GM12878 (cell line): ENCODE measurements at regions of chr17 and their contacts with region 1.

Region 1: GRCh38 chr17:62109378-62109902 is 44.4 kb upstream of the MED13 start:
- DNase-seq: peak; percentile 77
- ATAC-seq: peak; percentile 100
- H3K4me3 ChIP-seq: no peak overlapping the region
- H3K27ac ChIP-seq: no peak overlapping the region
- H3K4me1 ChIP-seq: peaks cover 2% of the 10 kb centered on the region; the same call in 1 of the 2 replicates
- H3K27me3 ChIP-seq: no peaks in the 10 kb centered on the region; a peak in 1 of 4 replicates
- CTCF ChIP-seq: peak; percentile 97 to 100 (median 100); a peak in 5 of 6 replicates
- EP300 ChIP-seq: no peak
- POLR2A ChIP-seq: no peak
- RAD21 ChIP-seq: peak; percentile 100

Region 2: DNA sequence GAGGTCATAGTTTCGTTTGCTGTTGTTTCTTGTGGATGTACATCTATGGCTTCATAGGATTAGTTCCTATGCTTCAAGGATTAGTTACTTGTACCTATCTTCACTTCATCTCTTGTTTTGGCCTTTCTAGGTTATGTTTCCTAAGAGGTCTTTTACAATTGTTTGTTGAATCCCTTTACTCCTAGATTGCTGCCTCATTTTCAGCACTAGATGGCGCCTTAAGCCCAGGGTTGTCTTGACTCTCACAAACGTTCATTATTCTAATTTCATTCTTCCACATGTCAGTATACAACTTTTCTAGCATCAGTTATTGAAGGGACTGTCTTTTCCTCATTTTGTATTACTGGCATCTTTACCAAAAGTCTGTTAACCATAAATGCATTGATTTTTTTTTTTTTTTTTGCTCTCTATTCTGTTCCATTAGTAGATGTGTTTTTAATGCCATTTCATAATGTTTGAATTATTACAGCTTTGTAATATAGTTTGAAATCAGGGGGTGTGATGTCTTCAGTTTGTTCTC is 473.5 kb before region 1 on chr17:
- CTCF ChIA-PET with region 1: interaction called, 45 read pairs
- POLR2A ChIA-PET with region 1: no interaction called
- RAD21 ChIA-PET with region 1: interaction called, 27 read pairs
- SMC1A ChIA-PET with region 1: interaction called, 36 read pairs
- in situ Hi-C with region 1: loop called (anchors 5 kb)
- intact Hi-C with region 1: loop called (anchors 1 kb)
- DNase-seq: peak; percentile 35
- ATAC-seq: peak; percentile 76
- H3K4me3 ChIP-seq: no peak overlapping the region
- H3K27ac ChIP-seq: no peak overlapping the region
- H3K4me1 ChIP-seq: no peaks in the 10 kb centered on the region
- H3K27me3 ChIP-seq: no peaks in the 10 kb centered on the region; a peak in 1 of 4 replicates
- CTCF ChIP-seq: peak; percentile 75 to 83 (median 82)
- EP300 ChIP-seq: no peak
- POLR2A ChIP-seq: no peak
- RAD21 ChIP-seq: peak; percentile 98

Region 3: GRCh38 chr17:61875285-61875684 is 234.2 kb before region 1 on chr17:
- CTCF ChIA-PET with region 1: interaction called, 14 read pairs
- POLR2A ChIA-PET with region 1: interaction called, 11 read pairs
- RAD21 ChIA-PET with region 1: interaction called, 7 read pairs
- SMC1A ChIA-PET with region 1: interaction called, 13 read pairs
- in situ Hi-C with region 1: no loop called
- intact Hi-C with region 1: no loop called
- DNase-seq: no peak
- ATAC-seq: peak; percentile 47
- H3K4me3 ChIP-seq: no peak overlapping the region
- H3K27ac ChIP-seq: no peak overlapping the region
- H3K4me1 ChIP-seq: no peaks in the 10 kb centered on the region
- H3K27me3 ChIP-seq: no peaks in the 10 kb centered on the region
- CTCF ChIP-seq: no peak
- EP300 ChIP-seq: no peak
- POLR2A ChIP-seq: no peak
- RAD21 ChIP-seq: no peak

Region 4: DNA sequence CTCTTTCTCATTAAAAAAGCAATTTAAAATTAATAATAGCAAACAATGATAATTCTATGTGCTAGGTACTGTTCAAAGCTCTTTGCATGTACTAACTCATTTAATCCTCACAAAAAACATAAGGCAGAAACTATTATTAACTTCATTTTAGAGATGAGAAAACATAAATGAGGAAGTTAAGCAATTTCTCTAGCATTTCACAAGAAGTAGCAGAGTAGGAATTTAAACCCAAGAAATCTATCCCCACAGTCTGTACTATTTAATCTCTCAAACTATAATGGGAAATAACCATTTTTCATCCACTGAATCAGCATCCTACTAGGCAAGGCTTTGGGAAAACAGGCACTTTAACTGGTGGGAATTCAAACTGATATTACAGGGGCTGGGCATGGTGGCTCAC is 139.4 kb before region 1 on chr17:
- CTCF ChIA-PET with region 1: interaction called, 28 read pairs
- POLR2A ChIA-PET with region 1: interaction called, 3 read pairs
- RAD21 ChIA-PET with region 1: interaction called, 25 read pairs
- SMC1A ChIA-PET with region 1: interaction called, 14 read pairs
- in situ Hi-C with region 1: no loop called
- intact Hi-C with region 1: loop called (anchors 5 kb)
- DNase-seq: no peak
- ATAC-seq: no peak
- H3K4me3 ChIP-seq: no peak overlapping the region
- H3K27ac ChIP-seq: no peak overlapping the region
- H3K4me1 ChIP-seq: no peaks in the 10 kb centered on the region
- H3K27me3 ChIP-seq: no peaks in the 10 kb centered on the region
- CTCF ChIP-seq: no peak
- EP300 ChIP-seq: no peak
- POLR2A ChIP-seq: no peak
- RAD21 ChIP-seq: no peak

Region 5: DNA sequence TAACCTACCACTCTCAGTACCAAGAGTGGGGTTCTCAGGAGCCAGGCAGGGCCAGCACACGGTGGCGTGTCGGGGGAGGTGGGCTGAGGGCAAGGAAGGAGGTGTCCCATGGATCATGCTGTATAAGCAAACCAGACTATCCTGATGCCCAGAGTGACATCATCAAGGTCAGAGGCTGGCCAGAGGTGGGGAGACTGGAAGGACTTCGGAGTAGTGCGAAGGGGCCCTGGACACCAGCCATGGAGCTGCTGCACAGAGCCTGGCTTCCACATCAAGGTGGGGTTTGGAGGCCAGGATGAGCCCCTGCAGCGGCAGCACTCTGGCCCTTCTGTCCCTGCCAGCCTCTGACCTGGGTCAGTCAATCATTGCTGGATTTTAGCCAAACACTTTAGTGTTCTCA is 79.2 kb before region 1 on chr17:
- CTCF ChIA-PET with region 1: interaction called, 50 read pairs
- POLR2A ChIA-PET with region 1: no interaction called
- RAD21 ChIA-PET with region 1: interaction called, 26 read pairs
- SMC1A ChIA-PET with region 1: interaction called, 21 read pairs
- in situ Hi-C with region 1: no loop called
- intact Hi-C with region 1: no loop called
- DNase-seq: no peak
- ATAC-seq: no peak
- H3K4me3 ChIP-seq: no peak overlapping the region
- H3K27ac ChIP-seq: no peak overlapping the region
- H3K4me1 ChIP-seq: no peaks in the 10 kb centered on the region
- H3K27me3 ChIP-seq: no peaks in the 10 kb centered on the region
- CTCF ChIP-seq: no peak
- EP300 ChIP-seq: no peak
- POLR2A ChIP-seq: no peak; the same call in 1 of the 2 replicates
- RAD21 ChIP-seq: no peak

Region 6: GRCh38 chr17:62075308-62075815 is 34.1 kb before region 1 on chr17:
- CTCF ChIA-PET with region 1: interaction called, 45 read pairs
- POLR2A ChIA-PET with region 1: interaction called, 3 read pairs
- RAD21 ChIA-PET with region 1: interaction called, 25 read pairs
- SMC1A ChIA-PET with region 1: interaction called, 22 read pairs
- in situ Hi-C with region 1: no loop called
- intact Hi-C with region 1: no loop called
- DNase-seq: no peak
- ATAC-seq: peak; percentile 17; the same call in 1 of the 3 replicates
- H3K4me3 ChIP-seq: no peak overlapping the region
- H3K27ac ChIP-seq: no peak overlapping the region
- H3K4me1 ChIP-seq: 0 out of 2 replicates have a peak, but pooled peaks cover 2% of the 10 kb centered on the region
- H3K27me3 ChIP-seq: no peaks in the 10 kb centered on the region; a peak in 1 of 4 replicates
- CTCF ChIP-seq: no peak
- EP300 ChIP-seq: no peak
- POLR2A ChIP-seq: no peak
- RAD21 ChIP-seq: no peak

Region 7: DNA sequence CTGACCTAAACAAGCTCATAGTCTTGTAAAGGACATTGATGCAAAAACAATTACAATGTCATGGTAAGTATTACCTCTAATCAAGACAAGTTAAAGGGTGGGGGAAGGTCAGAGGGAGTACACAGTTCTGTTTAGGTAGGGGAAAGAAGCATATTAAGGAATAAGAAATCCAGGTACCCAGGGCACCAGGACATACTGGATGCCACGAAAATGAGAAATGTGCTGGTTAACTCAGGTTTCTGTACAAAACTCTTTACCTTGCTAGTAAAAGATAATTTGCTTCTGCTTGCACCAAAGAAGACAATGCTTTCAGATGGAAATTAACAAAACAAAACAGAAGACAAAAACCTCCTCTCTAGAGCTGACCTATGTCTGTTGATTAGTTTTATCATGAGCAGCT is 26.3 kb after region 1 on chr17:
- CTCF ChIA-PET with region 1: no interaction called
- POLR2A ChIA-PET with region 1: no interaction called
- RAD21 ChIA-PET with region 1: no interaction called
- SMC1A ChIA-PET with region 1: no interaction called
- in situ Hi-C with region 1: no loop called
- intact Hi-C with region 1: no loop called
- DNase-seq: no peak
- ATAC-seq: no peak
- H3K4me3 ChIP-seq: no peak overlapping the region
- H3K27ac ChIP-seq: no peak overlapping the region
- H3K4me1 ChIP-seq: no peaks in the 10 kb centered on the region
- H3K27me3 ChIP-seq: no peaks in the 10 kb centered on the region; a peak in 1 of 4 replicates
- CTCF ChIP-seq: no peak
- EP300 ChIP-seq: no peak
- POLR2A ChIP-seq: no peak
- RAD21 ChIP-seq: no peak